AG04450 (cell line): ENCODE measurements at regions of chr4 and their contacts with region 1.

Region 1: GRCh38 chr4:15479089-15479912 is 9.6 kb downstream of the CC2D2A start:
- DNase-seq: peak; percentile 70
- H3K4me3 ChIP-seq: peak overlapping the region; percentile 69
- H3K27ac ChIP-seq: peak overlapping the region; percentile 97
- H3K27me3 ChIP-seq: no peaks in the 10 kb centered on the region
- CTCF ChIP-seq: peak; percentile 84

Region 2: GRCh38 chr4:15513545-15513944 is 34.2 kb after region 1 on chr4:
- CTCF ChIA-PET with region 1: interaction called, 32 read pairs
- POLR2A ChIA-PET with region 1: interaction called, 5 read pairs
- DNase-seq: no peak
- H3K4me3 ChIP-seq: no peak overlapping the region
- H3K27ac ChIP-seq: no peak overlapping the region
- H3K27me3 ChIP-seq: no peaks in the 10 kb centered on the region
- CTCF ChIP-seq: peak; percentile 25; the same call in 1 of the 2 replicates

Region 3: DNA sequence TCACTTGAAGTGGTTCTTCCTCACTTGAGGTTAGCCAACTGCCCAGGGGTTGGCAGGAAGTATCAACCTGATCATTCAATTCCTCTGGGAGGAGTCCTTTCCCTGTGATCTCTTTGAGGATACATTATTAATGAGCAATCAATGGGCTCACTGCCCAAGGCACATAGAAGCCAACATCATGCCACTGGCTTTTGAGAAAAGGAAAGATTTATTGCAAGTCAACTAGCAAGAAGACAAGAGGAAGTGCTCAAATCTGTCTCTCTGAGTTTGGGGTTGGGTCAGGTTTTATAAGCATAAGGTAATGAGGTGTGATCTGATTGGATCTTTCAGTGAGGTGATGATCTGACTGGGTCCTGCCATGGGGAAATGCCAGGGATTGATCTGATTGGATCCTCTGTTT is 419.6 kb after region 1 on chr4:
- CTCF ChIA-PET with region 1: no interaction called
- POLR2A ChIA-PET with region 1: no interaction called
- DNase-seq: no peak
- H3K4me3 ChIP-seq: no peak overlapping the region
- H3K27ac ChIP-seq: no peak overlapping the region
- H3K27me3 ChIP-seq: peaks cover 19% of the 10 kb centered on the region
- CTCF ChIP-seq: no peak

Region 4: GRCh38 chr4:15956179-15956850 is 477.0 kb after region 1 on chr4:
- CTCF ChIA-PET with region 1: interaction called, 24 read pairs
- POLR2A ChIA-PET with region 1: no interaction called
- DNase-seq: no peak
- H3K4me3 ChIP-seq: no peak overlapping the region
- H3K27ac ChIP-seq: no peak overlapping the region
- H3K27me3 ChIP-seq: peaks cover 9% of the 10 kb centered on the region
- CTCF ChIP-seq: peak; percentile 98

Region 5: DNA sequence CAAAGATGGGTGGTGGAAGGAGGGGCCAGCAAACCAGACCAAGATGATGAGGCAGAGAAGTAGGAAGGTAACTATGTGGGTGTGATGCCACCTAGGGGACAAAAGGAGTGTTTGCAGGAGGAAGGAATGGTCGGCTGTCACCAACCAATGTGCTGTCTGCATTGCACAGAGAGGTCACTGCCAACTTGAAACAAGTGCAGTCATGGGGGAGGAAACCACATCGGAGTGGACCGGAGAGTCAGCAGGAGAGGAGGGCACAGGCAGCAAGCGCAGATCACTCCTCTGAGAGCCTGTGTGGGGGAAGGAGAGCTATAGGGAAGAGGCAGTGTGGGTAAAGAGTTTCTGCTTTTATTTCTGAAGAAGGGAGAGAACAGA is 522.2 kb after region 1 on chr4:
- CTCF ChIA-PET with region 1: interaction called, 10 read pairs
- POLR2A ChIA-PET with region 1: no interaction called
- DNase-seq: peak; percentile 45
- H3K4me3 ChIP-seq: no peak overlapping the region
- H3K27ac ChIP-seq: no peak overlapping the region
- H3K27me3 ChIP-seq: peaks cover 31% of the 10 kb centered on the region
- CTCF ChIP-seq: peak; percentile 94